HAP-1 (cell line): ENCODE measurements at regions of chr11 and their contacts with region 1.

Region 1: DNA sequence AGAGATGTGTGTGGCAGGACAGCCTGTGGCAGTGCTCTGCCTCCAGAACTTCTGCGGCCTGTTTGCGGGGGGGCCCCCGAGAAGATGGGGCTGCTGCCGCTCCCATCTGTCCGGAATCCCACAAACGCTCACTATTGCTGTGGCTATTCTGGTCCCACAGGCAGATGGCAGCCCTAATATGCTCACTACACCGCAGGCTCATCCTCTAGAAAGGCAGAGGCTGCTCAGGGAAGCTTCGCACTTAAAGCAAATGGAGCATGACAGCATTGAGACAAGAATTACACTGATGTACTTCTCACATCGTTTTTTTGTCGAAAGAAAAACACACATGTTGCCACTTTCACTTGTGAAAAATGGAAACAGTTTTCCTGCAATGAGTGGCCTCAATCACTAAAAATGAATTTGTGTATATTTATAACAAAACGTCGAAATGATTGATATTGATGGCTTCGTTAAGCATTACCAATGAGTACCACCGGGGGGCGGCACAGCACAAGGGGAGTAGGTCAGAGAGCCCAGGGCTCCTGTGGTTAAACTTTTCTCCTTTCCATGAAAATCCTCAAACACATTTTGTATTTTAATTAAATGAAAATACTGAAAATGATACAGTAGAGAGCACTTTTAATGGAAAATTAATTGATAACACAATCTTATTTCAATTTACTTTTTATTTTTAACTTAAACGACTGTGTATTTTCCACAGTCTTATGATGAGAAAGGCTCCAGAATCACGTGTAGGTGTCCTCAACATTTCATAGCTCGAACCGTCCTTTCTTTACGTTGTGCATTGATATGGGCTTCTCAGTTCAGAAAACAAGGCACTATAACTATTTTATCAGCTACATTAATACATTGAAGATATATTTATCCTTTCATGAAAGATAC is 69.1 kb downstream of the CTTN start:
- DNase-seq: peak; percentile 43 to 86
- H3K4me3 ChIP-seq: no peak overlapping the region
- H3K4me1 ChIP-seq: no peaks in the 10 kb centered on the region
- H3K27me3 ChIP-seq: 0 out of 2 replicates have a peak, but pooled peaks cover 2% of the 10 kb centered on the region

Region 2: DNA sequence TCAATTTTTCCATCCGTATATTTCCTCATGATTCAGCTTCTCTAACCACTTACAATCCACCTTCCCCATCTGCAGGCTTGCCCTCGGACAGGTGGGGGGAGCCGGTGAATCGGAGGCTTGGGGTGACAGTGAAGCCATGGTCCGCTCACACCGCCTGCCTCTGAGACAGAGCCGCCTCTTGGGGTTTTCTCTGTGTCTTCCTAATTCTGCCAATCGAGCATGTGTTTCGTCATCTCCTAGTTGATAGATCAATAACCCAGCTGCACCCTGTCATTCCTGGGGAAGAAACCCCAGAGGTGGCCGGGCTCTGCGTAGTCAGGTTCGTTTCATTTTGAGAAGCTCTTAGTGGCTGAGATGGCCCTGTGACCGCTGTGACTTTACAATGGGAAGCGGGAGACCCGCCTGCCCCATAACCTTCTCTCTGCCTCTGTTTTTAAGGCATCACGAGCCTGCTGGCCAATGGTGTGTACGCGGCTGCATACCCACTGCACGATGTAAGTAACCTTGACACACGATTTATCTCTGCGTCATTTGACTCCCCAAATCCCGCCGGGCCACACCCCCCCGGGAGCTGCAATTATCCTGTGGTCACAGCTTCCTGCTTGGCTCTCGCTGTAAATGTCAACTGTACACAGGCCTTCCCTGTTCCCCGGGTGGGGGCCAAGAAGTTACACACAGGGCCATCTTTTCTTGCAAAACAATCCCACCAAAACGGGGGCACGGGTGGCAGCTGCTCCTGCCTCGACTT is 356.0 kb before region 1 on chr11:
- in situ Hi-C with region 1: no loop called
- DNase-seq: peak; percentile 39 to 77
- H3K4me3 ChIP-seq: no peak overlapping the region
- H3K4me1 ChIP-seq: peaks cover 3% of the 10 kb centered on the region
- H3K27me3 ChIP-seq: no peaks in the 10 kb centered on the region

Region 3: DNA sequence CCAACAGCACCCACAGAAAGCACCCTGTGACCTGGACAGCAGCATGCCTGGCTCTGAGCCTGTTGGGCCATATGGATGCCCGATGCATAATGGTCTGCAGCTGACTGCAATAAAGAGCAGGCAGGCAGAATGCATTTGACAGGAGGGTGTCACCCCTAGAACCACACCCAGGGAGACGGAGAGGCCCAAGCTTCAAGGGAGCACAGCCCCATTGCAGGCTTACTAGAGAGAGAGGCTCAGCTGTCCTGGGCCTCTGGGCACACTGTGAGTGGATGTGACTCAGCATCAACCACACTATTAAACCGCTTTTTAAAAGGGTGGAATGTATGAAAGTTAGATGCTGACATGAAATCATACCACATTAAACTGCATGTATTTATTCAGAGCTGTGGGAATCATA is 296.2 kb after region 1 on chr11:
- in situ Hi-C with region 1: loop called (anchors 5 kb)
- DNase-seq: no peak
- H3K4me3 ChIP-seq: no peak overlapping the region
- H3K4me1 ChIP-seq: no peaks in the 10 kb centered on the region
- H3K27me3 ChIP-seq: no peaks in the 10 kb centered on the region

Region 4: GRCh38 chr11:71080239-71081097 is 613.0 kb after region 1 on chr11:
- in situ Hi-C with region 1: no loop called
- DNase-seq: peak; percentile 37 to 76
- H3K4me3 ChIP-seq: no peak overlapping the region
- H3K4me1 ChIP-seq: no peaks in the 10 kb centered on the region
- H3K27me3 ChIP-seq: no peaks in the 10 kb centered on the region

Region 5: DNA sequence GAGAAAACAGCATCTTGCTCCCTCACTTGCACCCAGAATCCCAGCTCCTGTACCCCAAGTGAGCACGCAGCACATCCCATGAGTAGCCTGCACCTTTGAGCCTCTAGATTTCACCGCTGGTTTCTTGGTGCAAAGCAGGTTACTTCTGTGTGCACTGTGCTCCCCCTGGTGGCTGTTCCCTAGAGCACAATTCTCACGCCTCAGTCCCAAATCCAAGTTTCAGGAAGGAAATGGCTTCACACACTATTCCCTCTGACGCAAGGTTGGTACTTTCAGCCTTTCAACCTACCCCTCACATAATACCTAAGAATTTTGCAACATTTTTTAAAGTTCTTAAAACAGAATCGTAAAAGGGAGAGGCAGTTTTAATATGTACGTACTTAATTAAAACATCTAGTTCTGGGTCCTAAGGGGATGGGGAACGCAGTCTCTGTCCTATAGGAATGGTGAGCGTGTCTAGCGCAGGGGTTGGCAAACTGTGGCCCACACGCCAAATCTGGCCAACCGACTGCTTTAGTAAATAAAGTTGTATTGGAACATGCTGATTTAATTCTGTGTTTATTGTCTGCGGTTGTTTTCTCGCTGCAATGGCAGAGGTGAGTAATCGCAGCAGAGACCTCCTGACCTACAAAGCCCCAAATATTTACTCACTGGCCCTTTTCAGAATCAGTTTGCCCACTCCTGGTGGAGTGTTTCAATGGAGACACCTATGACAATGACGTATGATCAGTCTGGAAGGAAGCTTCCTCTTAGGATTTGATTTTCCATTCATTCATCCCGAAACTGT is 953.2 kb after region 1 on chr11:
- in situ Hi-C with region 1: loop called (anchors 25 kb)
- DNase-seq: peak; percentile 16 to 61
- H3K4me3 ChIP-seq: no peak overlapping the region
- H3K4me1 ChIP-seq: no peaks in the 10 kb centered on the region
- H3K27me3 ChIP-seq: no peaks in the 10 kb centered on the region